A673 (cell line): ENCODE measurements at regions of chr1 and their contacts with region 1.

Region 1: DNA sequence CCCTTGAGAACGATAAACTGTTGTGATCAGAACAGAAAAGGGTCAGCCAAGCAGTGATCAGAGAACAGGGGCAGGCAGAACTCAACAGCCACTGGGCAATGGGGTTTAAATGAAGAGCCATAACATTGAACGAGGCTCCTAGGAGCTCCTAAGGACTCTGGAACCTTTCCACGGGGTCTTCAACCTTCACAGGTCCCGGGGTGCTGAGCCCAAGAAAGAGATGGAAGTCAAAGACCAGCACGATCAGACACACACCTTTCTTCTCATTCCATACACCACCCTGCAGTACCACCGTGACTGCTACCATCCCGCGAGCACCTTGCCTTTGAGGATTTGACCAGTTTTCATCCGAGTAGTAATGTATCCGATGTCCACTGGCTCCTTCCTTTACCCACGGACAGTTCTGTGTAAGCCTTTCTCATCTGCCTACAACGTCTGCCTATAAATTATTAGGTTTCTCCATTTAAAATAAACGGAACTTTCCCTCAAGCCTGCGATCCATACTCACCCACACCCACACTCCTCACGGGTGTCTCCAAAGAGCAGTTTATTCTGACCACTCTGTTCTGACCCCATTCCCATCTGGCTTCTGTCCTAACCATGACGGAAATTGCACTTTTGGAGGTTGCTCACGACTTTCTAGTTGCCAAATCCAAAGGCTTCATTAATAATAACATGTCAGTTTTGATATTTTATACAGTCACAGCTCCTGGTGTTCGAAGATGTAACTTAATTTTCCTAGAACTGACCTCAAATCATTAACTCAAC is 16.8 kb upstream of the HHAT start:
- DNase-seq: no peak
- H3K4me3 ChIP-seq: peak overlapping the region; percentile 54
- H3K27ac ChIP-seq: no peak overlapping the region
- H3K4me1 ChIP-seq: peaks cover 14% of the 10 kb centered on the region
- H3K27me3 ChIP-seq: no peaks in the 10 kb centered on the region
- CTCF ChIP-seq: no peak

Region 2: GRCh38 chr1:209720326-209720725 is 591.6 kb before region 1 on chr1:
- CTCF ChIA-PET with region 1: interaction called, 11 read pairs
- POLR2A ChIA-PET with region 1: no interaction called
- intact Hi-C with region 1: no loop called
- DNase-seq: no peak
- H3K4me3 ChIP-seq: no peak overlapping the region
- H3K27ac ChIP-seq: no peak overlapping the region
- H3K4me1 ChIP-seq: peaks cover 4% of the 10 kb centered on the region
- H3K27me3 ChIP-seq: no peaks in the 10 kb centered on the region
- CTCF ChIP-seq: no peak

Region 3: GRCh38 chr1:209860293-209860881 is 451.5 kb before region 1 on chr1:
- CTCF ChIA-PET with region 1: no interaction called
- POLR2A ChIA-PET with region 1: no interaction called
- intact Hi-C with region 1: loop called (anchors 2 kb)
- DNase-seq: peak; percentile 94
- H3K4me3 ChIP-seq: no peak overlapping the region
- H3K27ac ChIP-seq: no peak overlapping the region
- H3K4me1 ChIP-seq: peaks cover 24% of the 10 kb centered on the region
- H3K27me3 ChIP-seq: no peaks in the 10 kb centered on the region
- CTCF ChIP-seq: peak; percentile 96

Region 4: DNA sequence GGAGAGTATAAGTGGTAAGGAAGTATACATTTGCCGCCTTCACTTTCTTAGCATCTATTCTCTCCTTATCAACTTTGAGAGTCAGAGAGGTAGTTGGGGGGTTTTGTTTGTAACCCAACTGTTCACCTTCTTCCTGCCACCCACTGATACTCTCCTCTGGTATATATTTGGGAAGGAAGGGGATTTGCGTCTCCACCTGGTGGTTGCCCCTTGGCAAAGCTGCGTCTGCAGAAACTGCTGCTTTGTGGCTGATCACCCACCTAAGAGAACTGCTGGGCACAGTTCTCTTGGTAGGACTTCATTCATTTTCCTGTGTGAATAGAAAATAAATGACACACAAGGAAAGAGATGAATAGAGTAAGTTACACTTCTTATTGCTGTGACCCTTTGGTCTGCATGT is 286.9 kb before region 1 on chr1:
- CTCF ChIA-PET with region 1: no interaction called
- POLR2A ChIA-PET with region 1: no interaction called
- intact Hi-C with region 1: loop called (anchors 10 kb)
- DNase-seq: peak; percentile 19
- H3K4me3 ChIP-seq: no peak overlapping the region
- H3K27ac ChIP-seq: no peak overlapping the region
- H3K4me1 ChIP-seq: no peaks in the 10 kb centered on the region
- H3K27me3 ChIP-seq: no peaks in the 10 kb centered on the region
- CTCF ChIP-seq: peak; percentile 41

Region 5: DNA sequence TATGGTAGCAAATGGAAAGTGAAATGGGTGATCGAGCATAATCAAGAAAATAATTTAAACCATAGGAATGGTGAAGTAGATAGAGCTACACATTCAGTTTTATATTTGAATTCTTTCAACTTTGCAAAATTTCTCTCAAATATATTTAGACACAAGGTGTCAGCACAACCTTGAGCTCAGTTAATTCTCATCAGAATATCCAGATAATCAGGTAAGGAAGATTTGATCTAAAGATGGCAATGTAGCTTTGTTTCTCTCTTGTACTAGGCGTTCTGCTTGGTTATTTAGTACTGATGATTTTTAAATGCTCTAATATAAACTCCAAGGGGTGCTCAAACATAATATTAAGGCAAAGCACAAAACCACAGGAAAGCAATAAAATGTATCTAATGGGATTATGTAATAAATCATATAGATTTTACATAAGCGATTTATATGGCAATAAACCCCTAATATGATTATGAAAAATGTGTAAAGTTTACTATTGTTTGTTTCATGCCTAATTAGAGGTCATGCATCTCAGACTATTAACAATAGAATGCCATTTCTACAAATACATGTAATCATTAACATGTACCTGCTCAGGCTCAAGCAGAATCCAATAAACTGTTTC is 111.7 kb before region 1 on chr1:
- CTCF ChIA-PET with region 1: interaction called, 3 read pairs
- POLR2A ChIA-PET with region 1: no interaction called
- intact Hi-C with region 1: loop called (anchors 1 kb)
- DNase-seq: peak; percentile 33
- H3K4me3 ChIP-seq: no peak overlapping the region
- H3K27ac ChIP-seq: no peak overlapping the region
- H3K4me1 ChIP-seq: peaks cover 19% of the 10 kb centered on the region
- H3K27me3 ChIP-seq: peaks cover 30% of the 10 kb centered on the region
- CTCF ChIP-seq: peak; percentile 34; the same call in 1 of the 2 replicates

Region 6: DNA sequence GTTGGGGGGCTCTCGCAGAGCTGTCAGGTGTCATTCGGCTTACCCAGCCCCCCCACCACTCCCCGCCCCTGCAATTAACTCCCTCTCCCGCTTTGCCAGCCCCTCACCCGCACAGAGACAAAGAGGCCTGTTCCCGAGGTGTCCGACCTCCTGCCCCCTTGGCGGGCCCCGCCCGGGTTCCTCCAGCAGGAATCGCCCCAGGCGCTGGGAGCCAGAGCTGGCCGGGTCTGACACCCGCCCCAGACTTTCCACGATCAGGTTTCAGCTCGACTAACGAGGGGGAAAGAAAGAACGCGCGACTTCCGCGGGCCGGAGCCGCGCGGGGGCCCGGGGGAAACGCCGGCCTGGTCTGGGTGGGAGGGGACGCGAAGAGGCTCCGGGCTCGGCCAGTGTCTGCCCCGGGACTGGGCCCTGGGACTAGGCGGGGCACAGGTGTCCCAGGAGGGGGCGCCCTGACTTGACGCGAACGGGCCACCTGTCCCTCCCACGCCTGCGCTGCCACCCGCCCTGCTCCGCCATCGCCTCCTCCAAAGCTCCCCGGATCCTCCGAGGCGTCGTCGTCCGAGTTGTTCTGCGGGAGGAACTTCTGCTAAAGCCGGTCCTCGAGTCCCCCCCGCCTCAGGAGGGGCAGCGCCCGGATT is 19.6 kb before region 1 on chr1:
- CTCF ChIA-PET with region 1: no interaction called
- POLR2A ChIA-PET with region 1: no interaction called
- intact Hi-C with region 1: loop called (anchors 1 kb)
- DNase-seq: no peak
- H3K4me3 ChIP-seq: peak overlapping the region; percentile 47
- H3K27ac ChIP-seq: peak overlapping the region; percentile 94
- H3K4me1 ChIP-seq: peaks cover 58% of the 10 kb centered on the region
- H3K27me3 ChIP-seq: no peaks in the 10 kb centered on the region
- CTCF ChIP-seq: peak; percentile 38

Region 7: GRCh38 chr1:210709701-210710100 is 397.8 kb after region 1 on chr1:
- CTCF ChIA-PET with region 1: no interaction called
- POLR2A ChIA-PET with region 1: no interaction called
- intact Hi-C with region 1: no loop called
- DNase-seq: no peak
- H3K4me3 ChIP-seq: no peak overlapping the region
- H3K27ac ChIP-seq: no peak overlapping the region
- H3K4me1 ChIP-seq: no peaks in the 10 kb centered on the region
- H3K27me3 ChIP-seq: peaks cover 34% of the 10 kb centered on the region
- CTCF ChIP-seq: no peak